Sciatic nerve (tissue), 2 donors: ENCODE measurements at regions of chr21 and their contacts with region 1.

Region 1: DNA sequence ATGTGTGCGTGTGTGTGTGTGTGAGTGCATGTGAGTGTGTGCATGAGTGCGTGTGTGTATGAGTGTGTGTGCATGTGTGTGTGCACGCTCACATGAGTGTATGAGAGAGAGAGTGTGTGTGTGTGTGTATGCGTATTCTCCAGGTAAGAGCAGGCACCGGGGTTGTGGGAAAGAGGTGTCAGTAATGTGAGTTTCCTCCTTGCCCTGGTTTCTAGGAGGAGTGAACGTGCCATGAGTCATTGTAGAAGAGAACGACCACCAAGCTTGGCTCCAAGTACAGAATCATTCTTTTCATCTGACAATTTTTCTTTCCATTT is 79.1 kb downstream of the POFUT2 start:
- DNase-seq: no peak
- ATAC-seq: no peak

Region 2: GRCh38 chr21:45250914-45251634 is 42.5 kb after region 1 on chr21:
- intact Hi-C with region 1: loop called (anchors 1 kb)
- DNase-seq: no peak
- ATAC-seq: no peak